IMR-90 (cell line): ENCODE measurements at regions of chr5 and their contacts with region 1.

Region 1: GRCh38 chr5:177497292-177498033 is at the start of gene PDLIM7:
- DNase-seq: peak; percentile 97
- ATAC-seq: peak; percentile 57
- H3K4me3 ChIP-seq: peak within 1 kb of the TSS; percentile 91
- H3K27ac ChIP-seq: peak within 1 kb of the TSS; percentile 100
- H3K4me1 ChIP-seq: peaks cover 40% of the 10 kb centered on the region
- H3K27me3 ChIP-seq: no peaks in the 10 kb centered on the region
- CTCF ChIP-seq: no peak
- POLR2A ChIP-seq: peak; percentile 98
- RAD21 ChIP-seq: no peak
- total RNA-seq, gene PDLIM7: 70.4 and 72.5 TPM in 2 replicates

Region 2: DNA sequence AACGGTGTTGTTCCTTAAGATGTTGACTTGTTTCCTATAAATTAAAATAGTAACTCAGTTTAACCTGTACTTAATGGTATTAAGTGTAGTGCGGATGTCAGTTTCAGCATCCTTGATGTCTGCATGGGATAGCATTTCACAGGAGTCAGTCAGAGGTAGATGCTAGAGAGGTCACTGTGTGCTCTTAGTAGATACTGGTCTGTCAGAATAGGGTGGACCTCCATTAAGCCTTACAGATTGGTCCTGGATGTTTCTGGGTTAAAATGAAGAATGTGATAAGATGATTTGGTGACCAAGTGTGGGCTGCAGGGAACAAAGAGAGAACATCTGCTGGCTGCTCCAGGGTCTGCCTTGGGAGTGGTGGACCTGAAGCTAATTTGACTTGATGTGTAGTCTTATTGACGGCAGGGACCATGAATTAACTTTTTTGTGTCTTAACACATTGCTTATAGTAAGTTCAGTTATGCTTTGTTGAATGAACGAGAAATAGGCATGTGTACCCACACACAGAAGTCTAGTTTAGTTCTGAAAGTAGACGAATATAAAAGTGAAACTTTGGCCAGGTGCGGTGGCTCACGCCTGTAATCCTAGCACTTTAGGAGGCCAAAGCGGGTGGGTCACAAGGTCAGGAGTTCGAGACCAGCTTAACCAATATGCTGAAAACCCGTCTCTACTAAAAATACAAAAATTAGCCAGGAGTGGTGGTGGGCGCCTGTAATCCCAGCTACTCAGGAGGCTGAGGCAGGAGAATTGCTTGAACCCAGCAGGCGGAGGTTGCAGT is 206.5 kb before region 1 on chr5:
- CTCF ChIA-PET with region 1: no interaction called
- POLR2A ChIA-PET with region 1: no interaction called
- dilution Hi-C with region 1: no loop called
- in situ Hi-C with region 1: no loop called
- intact Hi-C with region 1: no loop called
- DNase-seq: no peak
- ATAC-seq: no peak
- H3K4me3 ChIP-seq: no peak overlapping the region
- H3K27ac ChIP-seq: no peak overlapping the region
- H3K4me1 ChIP-seq: no peaks in the 10 kb centered on the region
- H3K27me3 ChIP-seq: no peaks in the 10 kb centered on the region
- CTCF ChIP-seq: no peak
- POLR2A ChIP-seq: no peak
- RAD21 ChIP-seq: no peak

Region 3: GRCh38 chr5:177311723-177312648 is 185.5 kb before region 1 on chr5 and contains the start of gene MXD3:
- CTCF ChIA-PET with region 1: no interaction called
- POLR2A ChIA-PET with region 1: interaction called, 3 read pairs
- dilution Hi-C with region 1: no loop called
- in situ Hi-C with region 1: no loop called
- intact Hi-C with region 1: loop called (anchors 2 kb)
- DNase-seq: peak; percentile 90
- ATAC-seq: peak; percentile 92
- H3K4me3 ChIP-seq: peak within 1 kb of the TSS; percentile 44
- H3K27ac ChIP-seq: peak within 1 kb of the TSS; percentile 52; the same call in 1 of the 2 replicates
- H3K4me1 ChIP-seq: peaks cover 7% of the 10 kb centered on the region; the same call in 1 of the 2 replicates
- H3K27me3 ChIP-seq: no peaks in the 10 kb centered on the region
- CTCF ChIP-seq: no peak
- POLR2A ChIP-seq: no peak
- RAD21 ChIP-seq: no peak
- total RNA-seq, gene MXD3: 5.6 and 7.3 TPM in 2 replicates

Region 4: DNA sequence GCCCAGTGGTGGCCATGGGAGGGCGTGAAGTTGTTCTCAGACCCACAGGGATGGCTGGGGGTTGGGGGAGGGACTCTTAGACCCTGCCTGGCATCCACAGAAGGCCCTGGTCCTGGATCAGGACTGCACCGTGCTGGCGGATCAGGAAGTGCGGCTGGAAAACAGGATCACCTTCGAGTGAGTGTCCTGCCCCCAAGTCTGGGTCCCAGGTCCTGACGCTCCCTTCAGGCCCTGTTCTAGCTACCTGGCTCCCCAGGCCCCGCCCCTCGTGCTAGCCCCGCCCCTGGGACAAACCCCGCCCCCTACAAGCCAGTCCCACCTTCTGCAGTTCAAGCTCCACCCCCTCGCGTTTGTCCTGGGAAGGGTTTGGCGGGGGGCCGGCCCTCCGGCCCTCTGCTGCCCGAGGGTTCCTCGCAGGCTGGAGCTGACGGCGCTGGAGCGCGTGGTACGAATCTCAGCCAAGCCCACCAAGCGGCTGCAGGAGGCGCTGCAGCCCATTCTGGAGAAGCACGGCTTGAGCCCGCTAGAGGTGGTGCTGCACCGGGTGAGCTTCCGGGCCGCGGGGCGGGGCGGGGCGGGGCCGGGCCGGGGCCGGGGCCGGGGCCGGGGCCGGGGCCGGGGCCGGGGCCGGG is 126.9 kb before region 1 on chr5:
- CTCF ChIA-PET with region 1: no interaction called
- POLR2A ChIA-PET with region 1: interaction called, 3 read pairs
- dilution Hi-C with region 1: no loop called
- in situ Hi-C with region 1: no loop called
- intact Hi-C with region 1: loop called (anchors 1 kb)
- DNase-seq: peak; percentile 82
- ATAC-seq: peak; percentile 69
- H3K4me3 ChIP-seq: peak overlapping the region; percentile 19; the same call in 1 of the 2 replicates
- H3K27ac ChIP-seq: no peak overlapping the region
- H3K4me1 ChIP-seq: peaks cover 11% of the 10 kb centered on the region; the same call in 1 of the 2 replicates
- H3K27me3 ChIP-seq: peaks cover 6% of the 10 kb centered on the region; the same call in 1 of the 2 replicates
- CTCF ChIP-seq: peak; percentile 78
- POLR2A ChIP-seq: no peak
- RAD21 ChIP-seq: peak; percentile 65

Region 5: DNA sequence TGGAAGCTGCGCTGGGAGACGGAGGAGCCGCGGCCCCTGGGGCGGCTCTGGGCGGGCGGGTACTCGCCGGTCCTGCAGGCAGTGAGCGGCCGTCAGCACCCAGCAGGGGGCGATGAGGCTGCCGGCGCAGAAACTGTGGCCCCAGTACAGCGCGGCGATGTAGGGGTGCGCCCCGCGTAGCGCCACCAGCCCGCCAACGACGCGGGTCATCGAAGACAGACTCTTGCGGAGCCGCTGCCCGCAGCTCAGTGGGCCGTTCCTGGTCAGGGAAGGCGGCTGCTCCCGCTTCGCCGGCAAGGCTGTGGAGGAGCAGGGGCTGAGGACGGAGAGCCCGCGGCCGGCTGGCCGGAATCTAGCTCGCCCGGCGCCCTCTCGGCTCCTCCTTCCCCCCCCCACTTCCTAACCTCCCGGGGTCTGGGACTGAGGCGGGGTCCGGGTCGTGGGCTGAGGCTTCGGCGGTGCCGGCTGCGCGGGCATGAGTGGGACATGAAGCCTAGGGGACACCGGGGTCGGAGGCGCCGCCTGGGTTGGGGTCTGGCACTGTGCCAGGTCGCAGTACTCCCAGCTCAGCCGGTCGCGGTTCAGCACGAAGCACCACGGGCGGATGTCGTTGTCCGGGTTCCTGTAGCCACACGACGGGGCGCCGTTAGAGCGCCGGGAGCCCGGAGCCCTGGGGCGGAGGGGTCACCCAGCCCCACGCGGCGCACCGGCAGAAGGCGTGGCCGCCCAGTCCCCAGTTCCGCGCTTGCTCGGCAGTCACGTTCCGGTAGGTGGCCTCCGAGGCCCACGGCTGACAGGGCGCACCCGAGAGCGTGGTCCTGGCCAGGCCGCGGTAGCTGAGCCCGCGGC is 93.4 kb before region 1 on chr5:
- CTCF ChIA-PET with region 1: interaction called, 10 read pairs
- POLR2A ChIA-PET with region 1: no interaction called
- dilution Hi-C with region 1: no loop called
- in situ Hi-C with region 1: no loop called
- intact Hi-C with region 1: loop called (anchors 1 kb)
- DNase-seq: peak; percentile 75
- ATAC-seq: peak; percentile 90
- H3K4me3 ChIP-seq: peak overlapping the region; percentile 57
- H3K27ac ChIP-seq: no peak overlapping the region; the same call in 1 of the 2 replicates
- H3K4me1 ChIP-seq: peaks cover 4% of the 10 kb centered on the region; the same call in 1 of the 2 replicates
- H3K27me3 ChIP-seq: peaks cover 54% of the 10 kb centered on the region
- CTCF ChIP-seq: peak; percentile 75
- POLR2A ChIP-seq: no peak
- RAD21 ChIP-seq: peak; percentile 84

Region 6: DNA sequence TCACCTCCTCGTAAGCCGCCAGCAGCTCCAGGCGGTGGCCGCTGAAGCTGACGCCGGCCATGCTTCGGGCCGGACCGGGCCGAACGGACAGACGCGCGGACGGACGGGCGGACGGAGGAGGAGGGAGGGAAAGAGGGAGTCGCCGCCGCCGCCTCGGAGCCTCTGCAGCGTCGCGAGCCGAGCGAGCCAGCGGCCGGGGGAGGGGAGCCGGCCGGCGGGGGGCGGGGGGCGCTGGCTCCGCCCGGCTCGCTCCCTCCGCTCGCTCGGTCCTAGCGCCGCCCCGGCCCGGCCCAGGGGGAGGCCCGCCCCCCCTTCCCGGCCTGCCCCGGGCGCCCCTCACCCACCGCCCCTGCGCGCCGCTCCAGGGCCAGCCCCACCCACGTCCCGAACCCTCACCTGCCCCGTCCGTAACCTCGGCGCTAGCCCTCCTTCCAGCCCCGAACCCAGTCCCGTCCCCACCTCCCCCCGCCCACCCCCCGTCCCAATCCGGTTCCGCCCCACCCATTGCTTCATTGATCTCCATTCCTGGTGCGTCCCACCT is 23.9 kb before region 1 on chr5 and contains the start of gene DBN1:
- CTCF ChIA-PET with region 1: no interaction called
- POLR2A ChIA-PET with region 1: interaction called, 11 read pairs
- dilution Hi-C with region 1: no loop called
- in situ Hi-C with region 1: no loop called
- intact Hi-C with region 1: loop called (anchors 2 kb)
- DNase-seq: no peak
- ATAC-seq: peak; percentile 63
- H3K4me3 ChIP-seq: peak within 1 kb of the TSS; percentile 97
- H3K27ac ChIP-seq: peak within 1 kb of the TSS; percentile 93
- H3K4me1 ChIP-seq: peaks cover 45% of the 10 kb centered on the region
- H3K27me3 ChIP-seq: no peaks in the 10 kb centered on the region
- CTCF ChIP-seq: no peak
- POLR2A ChIP-seq: 0 out of 2 replicates have a peak, but pooled peaks have one; percentile 10
- RAD21 ChIP-seq: no peak
- total RNA-seq, gene DBN1: 122 and 212 TPM in 2 replicates